HEK293 (cell line): ENCODE measurements at regions of chr1 and their contacts with region 1.

Region 1: GRCh38 chr1:116178837-116179236 is 67.6 kb downstream of the MAB21L3 start:
- H3K4me3 ChIP-seq: no peak overlapping the region
- H3K27ac ChIP-seq: no peak overlapping the region
- H3K4me1 ChIP-seq: no peaks in the 10 kb centered on the region
- CTCF ChIP-seq: no peak

Region 2: GRCh38 chr1:116168277-116169097 is 10.3 kb before region 1 on chr1:
- CTCF ChIA-PET with region 1: interaction called, 12 read pairs
- POLR2A ChIA-PET with region 1: no interaction called
- H3K4me3 ChIP-seq: peak overlapping the region; percentile 27
- H3K27ac ChIP-seq: no peak overlapping the region; the same call in 1 of the 2 replicates
- H3K4me1 ChIP-seq: no peaks in the 10 kb centered on the region
- CTCF ChIP-seq: peak; percentile 31; the same call in 1 of the 2 replicates